MCF 10A (cell line): ENCODE measurements at regions of chr10 and their contacts with region 1.

Region 1: DNA sequence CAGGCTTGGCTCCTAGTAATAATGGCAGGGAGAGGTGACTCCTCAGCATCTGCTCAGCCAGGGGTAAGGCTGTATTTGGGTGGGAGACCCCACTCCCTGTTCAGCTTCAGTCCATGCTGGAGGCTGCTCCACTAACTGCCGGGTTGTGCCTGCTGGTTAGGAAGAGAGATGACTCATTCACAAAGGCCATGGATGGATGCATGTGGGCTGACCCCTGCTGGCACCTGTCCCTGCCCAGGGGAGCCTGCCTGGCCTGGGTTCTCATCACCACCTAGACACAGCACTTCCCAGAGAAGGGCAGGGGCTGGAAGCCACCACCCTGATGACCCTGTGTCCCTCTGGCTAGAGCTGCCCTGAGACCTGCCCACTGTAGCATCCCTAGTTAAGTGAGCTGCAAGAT is 59.0 kb downstream of the VSTM4 start:
- DNase-seq: peak; percentile 68
- H3K4me3 Mint-ChIP-seq: no peak overlapping the region
- H3K27ac Mint-ChIP-seq: no peak overlapping the region
- H3K4me1 Mint-ChIP-seq: peaks cover 6% of the 10 kb centered on the region
- H3K27me3 Mint-ChIP-seq: peaks cover 3% of the 10 kb centered on the region
- CTCF ChIP-seq: no peak

Region 2: DNA sequence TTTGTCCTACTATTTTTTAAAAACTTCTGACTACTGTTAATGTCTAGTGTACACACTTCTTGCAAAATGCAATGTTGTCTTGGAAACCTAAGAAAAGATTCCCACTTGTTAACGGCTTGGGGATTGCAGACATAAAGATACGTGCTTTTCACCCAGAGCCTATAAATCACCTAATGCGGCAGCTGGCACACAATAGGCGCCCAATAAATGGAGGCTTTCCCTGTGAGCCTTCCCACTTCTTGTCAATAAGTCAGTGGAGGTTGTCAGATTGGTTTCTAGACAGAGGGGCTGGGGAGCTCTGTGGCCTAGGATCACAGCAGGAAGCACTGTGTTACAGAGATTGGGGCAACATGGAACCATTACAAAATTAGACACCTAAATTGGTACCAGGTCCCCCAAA is 15.8 kb before region 1 on chr10:
- CTCF ChIA-PET with region 1: no interaction called
- POLR2A ChIA-PET with region 1: no interaction called
- intact Hi-C with region 1: no loop called
- DNase-seq: no peak
- H3K4me3 Mint-ChIP-seq: no peak overlapping the region
- H3K27ac Mint-ChIP-seq: no peak overlapping the region
- H3K4me1 Mint-ChIP-seq: no peaks in the 10 kb centered on the region
- H3K27me3 Mint-ChIP-seq: peaks cover 35% of the 10 kb centered on the region
- CTCF ChIP-seq: no peak

Region 3: DNA sequence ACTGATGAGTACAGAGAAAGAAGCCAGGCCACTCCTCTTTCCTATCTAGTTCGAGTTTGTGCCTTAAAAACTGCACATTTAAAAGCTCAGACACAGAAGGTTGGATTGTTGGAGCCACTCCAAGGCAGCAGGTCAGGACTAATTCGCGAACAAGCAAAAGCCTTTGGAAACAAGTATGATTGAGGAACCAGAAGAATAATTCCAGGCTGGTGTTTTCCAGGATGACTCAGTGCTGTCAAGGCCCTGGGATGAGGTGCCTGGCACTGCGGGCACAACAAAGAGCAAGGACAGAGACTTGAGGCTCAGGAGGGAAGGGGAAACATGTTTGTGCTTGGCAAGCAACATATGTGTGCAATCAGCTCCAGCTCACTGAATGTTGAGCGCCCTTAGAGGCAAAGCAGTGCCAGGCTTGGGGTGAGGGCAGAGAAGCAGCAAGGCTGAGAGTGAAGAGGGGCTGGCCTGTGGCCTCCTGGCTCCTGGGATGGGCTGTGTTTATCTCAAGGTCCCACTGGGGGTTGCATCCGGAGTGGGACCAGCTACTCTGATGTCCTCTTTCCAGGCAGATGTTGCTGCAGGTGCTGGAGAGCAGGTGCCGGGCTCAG is 14.9 kb after region 1 on chr10:
- CTCF ChIA-PET with region 1: no interaction called
- POLR2A ChIA-PET with region 1: interaction called, 12 read pairs
- intact Hi-C with region 1: no loop called
- DNase-seq: peak; percentile 85
- H3K4me3 Mint-ChIP-seq: no peak overlapping the region
- H3K27ac Mint-ChIP-seq: no peak overlapping the region
- H3K4me1 Mint-ChIP-seq: no peaks in the 10 kb centered on the region
- H3K27me3 Mint-ChIP-seq: peaks cover 20% of the 10 kb centered on the region
- CTCF ChIP-seq: no peak

Region 4: GRCh38 chr10:49200854-49201253 is 144.5 kb after region 1 on chr10:
- CTCF ChIA-PET with region 1: no interaction called
- POLR2A ChIA-PET with region 1: no interaction called
- intact Hi-C with region 1: no loop called
- DNase-seq: no peak
- H3K4me3 Mint-ChIP-seq: no peak overlapping the region
- H3K27ac Mint-ChIP-seq: no peak overlapping the region
- H3K4me1 Mint-ChIP-seq: no peaks in the 10 kb centered on the region
- H3K27me3 Mint-ChIP-seq: peaks cover 98% of the 10 kb centered on the region
- CTCF ChIP-seq: no peak